Thyroid gland (tissue), 4 donors: ENCODE measurements at regions of chr3 and their contacts with region 1.

Region 1: DNA sequence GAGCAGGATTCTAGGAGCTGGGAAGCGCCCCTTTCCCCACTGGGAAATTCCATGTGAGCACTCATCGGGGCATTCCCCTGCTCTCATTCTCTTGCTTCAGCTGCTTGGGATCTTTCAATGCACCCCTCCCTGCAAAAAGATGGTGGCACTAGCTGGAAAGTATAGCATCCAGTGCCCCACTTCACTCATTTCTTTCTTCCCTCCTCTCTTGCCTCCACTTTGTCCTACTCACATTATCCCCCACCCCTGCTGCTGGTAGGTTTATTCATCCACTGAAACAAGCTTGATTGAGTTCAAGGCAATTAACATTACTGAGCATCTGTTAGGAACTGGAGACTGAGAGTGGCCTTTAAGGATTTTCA is 84.8 kb upstream of the LIMD1 start:
- DNase-seq: no peak
- H3K4me3 ChIP-seq: no peak overlapping the region
- H3K27ac ChIP-seq: no peak overlapping the region
- H3K4me1 ChIP-seq: no peaks in the 10 kb centered on the region
- H3K27me3 ChIP-seq: no peaks in the 10 kb centered on the region
- CTCF ChIP-seq: no peak
- POLR2A ChIP-seq: no peak

Region 2: DNA sequence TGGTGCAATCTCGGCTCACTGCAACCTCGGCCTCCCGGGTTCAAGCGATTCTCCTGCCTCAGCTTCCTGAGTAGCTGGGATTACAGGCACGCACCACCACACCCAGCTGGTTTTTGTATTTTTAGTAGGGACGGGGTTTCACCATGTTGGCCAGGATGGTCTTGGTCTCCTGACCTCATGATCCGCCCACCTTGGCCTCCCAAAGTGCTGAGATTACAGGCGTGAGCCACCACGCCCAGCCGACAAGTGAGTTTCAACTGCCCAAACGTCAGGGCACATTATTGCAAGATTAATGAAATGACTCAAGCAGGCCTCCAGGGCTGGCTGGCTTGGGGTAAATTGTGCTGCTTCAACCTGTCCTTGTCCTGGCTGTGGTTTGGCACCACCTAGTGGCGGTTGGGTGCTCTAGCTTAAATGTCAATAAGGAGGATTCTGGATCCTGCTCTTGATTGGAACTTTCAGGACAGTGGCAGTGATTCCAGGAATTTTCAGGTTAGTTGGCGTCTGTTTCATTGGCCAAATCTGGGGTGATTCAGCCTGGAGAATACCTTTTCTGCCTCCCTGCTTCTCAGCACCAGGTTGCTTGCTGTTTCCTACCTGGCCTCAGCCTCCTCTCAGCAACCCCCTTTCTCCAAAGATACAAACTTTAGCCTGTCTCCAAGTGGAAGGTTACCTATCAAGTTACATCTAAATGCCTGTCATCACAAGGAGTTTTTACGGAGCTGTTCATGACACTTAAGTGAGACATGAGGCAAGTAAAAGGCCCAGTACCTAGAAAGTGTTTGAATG is 147.0 kb after region 1 on chr3:
- intact Hi-C with region 1: loop called (anchors 5 kb)
- DNase-seq: peak; percentile 91 to 93
- H3K4me3 ChIP-seq: no peak overlapping the region
- H3K27ac ChIP-seq: peak overlapping the region in 2 of 3 donors; percentile 39 to 49
- H3K4me1 ChIP-seq: peaks cover 25 to 54% of the 10 kb centered on the region in 2 donors
- H3K27me3 ChIP-seq: no peaks in the 10 kb centered on the region
- CTCF ChIP-seq: peak; percentile 81 to 99 (median 94)
- POLR2A ChIP-seq: no peak